Esophagus muscularis mucosa (tissue), 4 donors: ENCODE measurements at regions of chr20 and their contacts with region 1.

Region 1: GRCh38 chr20:49846206-49846807 is 33.7 kb downstream of the SLC9A8 start:
- DNase-seq: no peak
- H3K4me3 ChIP-seq: no peak overlapping the region
- H3K27ac ChIP-seq: no peak overlapping the region
- H3K4me1 ChIP-seq: peaks cover 6 to 14% (median 9%) of the 10 kb centered on the region in 4 donors
- H3K27me3 ChIP-seq: no peaks in the 10 kb centered on the region
- CTCF ChIP-seq: peak; percentile 57 to 67 (median 60)
- EP300 ChIP-seq: no peak
- POLR2A ChIP-seq: no peak

Region 2: DNA sequence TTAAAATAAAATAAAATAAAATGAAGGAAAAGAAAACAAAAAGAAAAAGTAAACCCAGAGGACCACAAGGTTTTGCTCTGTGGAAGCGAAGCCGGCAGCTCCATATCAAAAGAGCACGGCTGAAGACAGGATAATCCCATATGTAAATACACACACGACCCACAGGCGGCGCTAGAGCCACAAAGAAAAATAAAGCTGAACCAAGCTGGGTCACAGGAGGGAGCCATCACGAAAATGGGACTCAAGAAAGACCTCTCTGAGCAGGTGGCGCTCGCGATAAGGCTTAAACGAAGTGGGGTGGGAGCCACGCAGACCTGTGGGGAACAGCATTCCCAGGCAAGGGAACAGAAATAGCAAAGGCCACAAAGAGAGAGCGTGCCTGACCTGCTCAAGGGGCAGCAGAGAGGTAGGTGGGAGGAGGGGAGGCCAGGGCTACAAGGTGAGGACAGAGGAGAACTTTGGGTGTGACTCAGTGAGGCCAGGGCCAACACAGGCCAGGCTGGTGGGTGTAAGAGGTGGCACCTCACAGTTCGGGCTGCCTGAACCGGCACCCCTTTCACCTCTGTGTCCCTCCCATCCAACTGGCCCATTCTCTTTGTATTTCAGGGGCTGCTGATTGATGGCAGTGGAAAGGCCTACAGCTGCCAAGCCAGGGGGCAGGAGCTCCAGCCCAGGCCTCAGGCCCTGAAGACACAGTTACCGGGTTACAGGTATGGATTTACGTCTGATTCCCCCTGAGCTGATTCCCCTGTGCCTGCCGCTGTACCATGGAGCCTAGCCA is 304.4 kb before region 1 on chr20:
- intact Hi-C with region 1: loop called (anchors 10 kb)
- DNase-seq: peak; percentile 94
- H3K4me3 ChIP-seq: no peak overlapping the region
- H3K27ac ChIP-seq: peak overlapping the region in 3 of 4 donors; percentile 16 to 40 (median 32)
- H3K4me1 ChIP-seq: peaks cover 0 to 9% (median 3%) of the 10 kb centered on the region in 4 donors
- H3K27me3 ChIP-seq: no peaks in the 10 kb centered on the region
- CTCF ChIP-seq: peak; percentile 79 to 94 (median 82)
- EP300 ChIP-seq: no peak
- POLR2A ChIP-seq: no peak

Region 3: GRCh38 chr20:50020288-50020687 is 174.0 kb after region 1 on chr20:
- intact Hi-C with region 1: no loop called
- DNase-seq: no peak
- H3K4me3 ChIP-seq: no peak overlapping the region
- H3K27ac ChIP-seq: no peak overlapping the region
- H3K4me1 ChIP-seq: peaks cover 0 to 18% (median 13%) of the 10 kb centered on the region in 4 donors
- H3K27me3 ChIP-seq: peaks cover 0 to 15% (median 0%) of the 10 kb centered on the region in 4 donors
- CTCF ChIP-seq: no peak
- EP300 ChIP-seq: no peak
- POLR2A ChIP-seq: no peak

Region 4: DNA sequence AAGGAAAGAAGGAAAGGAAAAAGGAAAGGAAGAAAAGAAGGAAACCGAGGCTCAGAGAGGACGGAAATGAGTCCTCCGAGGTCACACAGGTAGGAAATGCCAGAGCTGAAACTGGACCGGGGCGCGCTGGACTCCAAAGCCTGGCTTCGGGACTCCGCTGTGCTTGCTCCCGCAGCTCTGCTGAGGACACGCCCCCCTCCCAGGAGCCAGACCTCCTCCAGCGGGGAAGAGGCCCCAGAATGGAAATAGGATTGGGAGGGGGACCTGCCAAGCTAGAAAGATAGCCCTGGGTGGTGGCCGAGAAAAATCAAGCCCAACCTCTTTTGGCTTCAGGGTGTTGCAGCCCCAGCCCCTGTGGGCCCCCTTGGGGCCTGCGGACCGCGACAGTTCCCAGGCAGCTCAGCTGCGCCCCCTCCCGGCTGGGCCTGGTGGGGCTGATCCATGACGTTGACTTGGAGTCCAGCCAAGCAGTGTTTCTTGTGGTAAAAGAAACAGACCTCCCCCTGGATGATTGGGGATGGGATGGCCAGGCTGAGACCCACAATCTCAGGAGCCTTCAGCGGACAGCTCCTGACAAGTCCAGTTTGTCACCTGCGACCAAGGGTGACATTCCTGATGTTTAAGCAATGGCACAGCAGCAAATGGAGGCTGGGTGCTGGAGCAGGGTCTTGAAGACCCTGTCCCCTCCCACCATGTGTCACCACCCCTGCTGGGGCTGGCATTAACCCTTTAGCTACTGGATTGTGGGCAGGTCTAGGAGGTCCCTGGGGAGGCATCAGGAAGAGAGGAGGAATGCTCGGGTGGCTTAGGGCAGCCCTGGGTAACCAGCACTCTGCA is 789.6 kb after region 1 on chr20:
- intact Hi-C with region 1: no loop called
- DNase-seq: no peak
- H3K4me3 ChIP-seq: peak overlapping the region in 3 of 4 donors; percentile 18 to 35 (median 22)
- H3K27ac ChIP-seq: peak overlapping the region; percentile 53 to 74 (median 66)
- H3K4me1 ChIP-seq: peaks cover 22 to 37% (median 34%) of the 10 kb centered on the region in 4 donors
- H3K27me3 ChIP-seq: no peaks in the 10 kb centered on the region
- CTCF ChIP-seq: peak; percentile 76 to 93 (median 79)
- EP300 ChIP-seq: no peak
- POLR2A ChIP-seq: no peak